Head of caudate nucleus (tissue), 42 donors: ENCODE measurements at regions of chr7 and their contacts with region 1.

Region 1: GRCh38 chr7:80453699-80454340 is 58.0 kb downstream of the GNAT3 start:
- DNase-seq: peak in 7 of 42 donors; percentile 10 to 47 (median 22)

Region 2: GRCh38 chr7:80060218-80060806 is 393.5 kb before region 1 on chr7:
- intact Hi-C with region 1: loop called (anchors 10 kb)
- DNase-seq: peak in 1 of 42 donors; percentile 7

Region 3: DNA sequence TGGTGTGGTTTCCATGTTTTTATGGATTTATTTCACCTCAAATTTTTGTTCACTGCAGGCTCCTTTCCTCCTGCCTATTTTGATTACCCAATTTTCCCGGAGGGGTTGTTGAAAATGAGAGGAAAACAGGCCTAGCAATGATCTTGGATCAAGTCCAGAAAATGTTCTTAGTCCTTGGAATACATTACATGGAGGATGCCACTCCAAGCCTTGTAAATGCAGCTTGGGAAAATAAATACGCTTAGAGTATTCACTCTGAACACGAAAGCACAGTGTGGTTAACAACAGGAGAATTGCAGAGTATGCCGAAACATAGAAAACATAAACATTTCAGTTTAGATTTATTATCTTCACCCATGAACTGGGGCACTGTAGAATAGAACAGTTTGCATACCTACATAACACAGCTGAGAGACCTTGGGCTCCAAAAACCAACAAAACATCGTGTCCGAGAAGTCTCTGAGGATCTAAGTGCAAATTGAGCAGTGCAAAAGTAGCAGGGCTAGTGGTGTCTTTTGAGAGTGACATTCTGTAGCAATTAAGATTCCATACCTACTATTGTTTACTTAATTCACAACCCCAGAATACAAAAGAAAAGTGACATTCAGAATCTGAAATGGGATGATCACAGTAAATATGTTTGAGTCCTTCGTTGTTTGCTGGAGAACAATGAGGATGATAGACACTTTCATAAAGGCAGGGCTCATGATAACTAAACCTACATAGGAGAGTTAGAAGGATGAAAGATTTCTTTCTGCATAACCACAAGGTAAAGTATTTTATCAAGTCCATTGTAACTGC is 177.0 kb after region 1 on chr7:
- intact Hi-C with region 1: no loop called
- DNase-seq: no peak